A549 (cell line): ENCODE measurements at regions of chr13 and their contacts with region 1.

Region 1: GRCh38 chr13:49844181-49844580 is 51.7 kb upstream of the KPNA3 start:
- DNase-seq: no peak
- ATAC-seq: no peak
- H3K4me3 ChIP-seq: no peak overlapping the region
- H3K27ac ChIP-seq: no peak overlapping the region
- H3K4me1 ChIP-seq: no peaks in the 10 kb centered on the region
- CTCF ChIP-seq: no peak
- EP300 ChIP-seq: no peak
- POLR2A ChIP-seq: no peak
- RAD21 ChIP-seq: no peak

Region 2: GRCh38 chr13:49792550-49793324 is 51.4 kb before region 1 on chr13 and contains the start of gene KPNA3:
- CTCF ChIA-PET with region 1: interaction called, 5 read pairs
- POLR2A ChIA-PET with region 1: interaction called, 10 read pairs
- DNase-seq: peak; percentile 73 to 93
- ATAC-seq: peak; percentile 91 to 98
- H3K4me3 ChIP-seq: peak within 1 kb of the TSS; percentile 98
- H3K27ac ChIP-seq: peak within 1 kb of the TSS; percentile 97 to 99
- H3K4me1 ChIP-seq: peaks cover 30% of the 10 kb centered on the region
- CTCF ChIP-seq: peak; percentile 29; the same call in 1 of the 3 replicates
- EP300 ChIP-seq: no peak
- POLR2A ChIP-seq: peak; percentile 71
- RAD21 ChIP-seq: peak in 1 of 2 experiments; percentile 53; a peak in 3 of 5 replicates
- polyA plus RNA-seq, gene KPNA3: 28.5 and 31.4 TPM in 2 replicates